ENCODE measurements at regions of chr14 and their contacts with region 1.

Region 1: GRCh38 chr14:20613094-20614037 is 22.2 kb upstream of the RNASE12 start:
- DNase-seq: peak; percentile 97
- ATAC-seq: peak; percentile 80
- H3K4me3 ChIP-seq: peak overlapping the region; percentile 46 to 61
- H3K27ac ChIP-seq: peak overlapping the region; percentile 57
- H3K4me1 ChIP-seq: peaks cover 12 to 39% of the 10 kb centered on the region in 2 experiments
- H3K27me3 ChIP-seq: no peaks in the 10 kb centered on the region
- CTCF ChIP-seq: peak; percentile 43 to 78 (median 74); a peak in 5 of 6 replicates
- POLR2A ChIP-seq: no peak
- RAD21 ChIP-seq: no peak; the same call in 1 of the 2 replicates

Region 2: DNA sequence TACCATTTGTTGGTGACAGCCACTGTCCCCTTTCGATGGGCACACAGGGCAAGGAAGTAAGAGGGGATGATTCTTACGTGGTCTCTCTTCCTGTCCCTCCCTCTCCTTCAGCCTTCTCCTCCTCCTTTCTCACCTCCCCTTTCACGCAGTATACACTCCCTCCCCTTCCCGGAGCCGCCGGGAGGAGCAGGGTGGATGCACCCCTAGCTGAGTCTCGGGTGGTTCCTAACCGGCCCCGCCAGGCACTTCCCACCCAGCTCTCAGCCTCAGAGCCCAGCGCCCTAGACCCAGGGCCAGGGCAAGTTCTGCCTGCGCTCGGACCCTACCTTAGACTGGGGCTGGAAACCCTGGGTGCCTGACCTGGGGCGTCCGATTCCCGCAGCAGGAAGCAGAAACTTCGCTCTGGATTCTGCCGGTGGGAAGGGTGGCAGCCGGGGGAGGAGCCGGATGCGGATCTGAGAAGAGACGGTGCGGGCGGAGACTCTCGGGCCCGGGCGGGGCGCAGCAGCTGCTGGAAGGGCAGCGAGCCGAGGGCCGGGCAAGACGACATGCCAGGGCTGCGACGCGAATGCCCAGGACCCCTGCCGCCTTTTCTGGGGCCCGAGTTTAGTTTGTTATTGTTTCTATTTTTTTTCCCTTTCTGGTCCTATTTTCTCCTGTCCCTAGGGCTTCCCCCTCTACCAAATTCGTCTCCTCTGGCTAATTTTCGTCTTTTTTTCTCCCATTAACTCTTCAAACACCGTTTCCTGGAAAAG is 200.1 kb before region 1 on chr14 and contains the start of gene TEP1:
- CTCF ChIA-PET with region 1: no interaction called
- POLR2A ChIA-PET with region 1: interaction called, 5 read pairs
- RAD21 ChIA-PET with region 1: no interaction called
- intact Hi-C with region 1: loop called (anchors 1 kb)
- DNase-seq: peak; percentile 58
- ATAC-seq: peak; percentile 93
- H3K4me3 ChIP-seq: peak within 1 kb of the TSS; percentile 91 to 96
- H3K27ac ChIP-seq: peak within 1 kb of the TSS; percentile 98
- H3K4me1 ChIP-seq: peaks cover 11 to 41% of the 10 kb centered on the region in 2 experiments
- H3K27me3 ChIP-seq: no peaks in the 10 kb centered on the region
- CTCF ChIP-seq: no peak
- POLR2A ChIP-seq: no peak
- RAD21 ChIP-seq: no peak
- total RNA-seq, gene TEP1: 22.4 TPM

Region 3: GRCh38 chr14:20469242-20469889 is 144.0 kb before region 1 on chr14 and contains the start of gene PNP:
- CTCF ChIA-PET with region 1: no interaction called
- POLR2A ChIA-PET with region 1: no interaction called
- RAD21 ChIA-PET with region 1: no interaction called
- intact Hi-C with region 1: loop called (anchors 5 kb)
- DNase-seq: peak; percentile 85
- ATAC-seq: peak; percentile 95
- H3K4me3 ChIP-seq: peak within 1 kb of the TSS; percentile 80 to 96
- H3K27ac ChIP-seq: peak within 1 kb of the TSS; percentile 86
- H3K4me1 ChIP-seq: peaks cover 10 to 15% of the 10 kb centered on the region in 2 experiments; a peak in 3 of 4 replicates
- H3K27me3 ChIP-seq: no peaks in the 10 kb centered on the region
- CTCF ChIP-seq: no peak
- POLR2A ChIP-seq: peak; percentile 99
- RAD21 ChIP-seq: 0 out of 2 replicates have a peak, but pooled peaks have one; percentile 8
- total RNA-seq, gene PNP: 63.0 TPM

Region 4: GRCh38 chr14:20624495-20625070 is 11.2 kb after region 1 on chr14:
- CTCF ChIA-PET with region 1: interaction called, 16 read pairs
- POLR2A ChIA-PET with region 1: interaction called, 7 read pairs
- RAD21 ChIA-PET with region 1: no interaction called
- intact Hi-C with region 1: loop called (anchors 1 kb)
- DNase-seq: no peak
- ATAC-seq: peak; percentile 45
- H3K4me3 ChIP-seq: peak overlapping the region; percentile 25 to 32
- H3K27ac ChIP-seq: peak overlapping the region; percentile 6; the same call in 1 of the 2 replicates
- H3K4me1 ChIP-seq: peaks cover 9 to 23% of the 10 kb centered on the region in 2 experiments
- H3K27me3 ChIP-seq: no peaks in the 10 kb centered on the region; the same call in 1 of the 2 replicates
- CTCF ChIP-seq: no peak
- POLR2A ChIP-seq: no peak
- RAD21 ChIP-seq: no peak

Region 5: DNA sequence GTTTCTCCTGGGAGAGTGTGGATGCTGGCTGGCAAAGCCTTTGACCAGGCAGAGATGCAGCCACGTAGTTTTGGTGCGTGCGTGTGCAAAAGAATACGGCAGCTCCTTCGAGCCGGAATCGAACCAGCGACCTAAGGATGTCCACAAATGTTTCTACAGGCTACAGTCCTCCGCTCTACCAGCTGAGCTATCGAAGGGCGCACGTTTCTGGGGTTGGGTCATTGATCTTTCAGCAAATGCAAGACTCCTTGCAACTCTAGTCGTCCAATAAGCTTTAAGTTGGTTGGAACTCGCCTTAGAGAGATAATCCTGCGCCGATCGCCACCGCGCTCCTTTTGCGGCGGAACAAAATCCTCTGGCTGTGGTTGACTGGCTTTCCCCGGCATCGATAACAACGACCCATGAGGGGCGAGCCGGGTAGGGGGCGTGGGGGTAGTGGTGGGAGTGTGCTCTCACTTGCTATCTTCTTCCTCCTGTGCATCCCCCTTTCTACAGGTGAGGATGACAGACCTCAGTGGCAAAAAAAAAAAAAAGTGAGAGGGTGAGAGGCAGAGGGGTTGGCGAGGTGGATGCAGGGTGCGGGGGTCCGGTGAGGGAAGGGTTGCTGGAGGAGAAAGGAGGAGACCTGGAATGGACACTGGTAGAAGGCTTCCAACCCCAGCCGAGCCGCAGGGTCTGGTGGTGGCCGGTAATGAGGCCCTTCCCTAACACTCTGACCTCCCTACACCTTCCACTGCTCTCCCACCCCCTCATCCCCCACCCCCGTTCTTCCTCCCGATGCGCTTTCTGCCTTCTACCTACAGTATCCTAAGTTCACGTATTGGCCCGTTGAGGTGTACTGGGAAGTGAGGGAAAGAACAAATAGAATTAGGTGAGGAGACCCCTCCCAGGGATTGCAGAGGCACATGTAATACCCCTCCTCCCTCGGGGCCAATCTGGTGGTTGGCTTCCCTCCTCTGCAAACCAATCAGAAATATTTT is 39.9 kb after region 1 on chr14:
- CTCF ChIA-PET with region 1: interaction called, 15 read pairs
- POLR2A ChIA-PET with region 1: interaction called, 4 read pairs
- RAD21 ChIA-PET with region 1: interaction called in 1 of 2 experiments, 3 read pairs
- intact Hi-C with region 1: loop called (anchors 1 kb)
- DNase-seq: peak; percentile 91
- ATAC-seq: peak; percentile 63
- H3K4me3 ChIP-seq: peak overlapping the region; percentile 38 to 42
- H3K27ac ChIP-seq: no peak overlapping the region
- H3K4me1 ChIP-seq: peaks cover 6 to 29% of the 10 kb centered on the region in 2 experiments
- H3K27me3 ChIP-seq: no peaks in the 10 kb centered on the region
- CTCF ChIP-seq: no peak
- POLR2A ChIP-seq: no peak
- RAD21 ChIP-seq: no peak

Region 6: DNA sequence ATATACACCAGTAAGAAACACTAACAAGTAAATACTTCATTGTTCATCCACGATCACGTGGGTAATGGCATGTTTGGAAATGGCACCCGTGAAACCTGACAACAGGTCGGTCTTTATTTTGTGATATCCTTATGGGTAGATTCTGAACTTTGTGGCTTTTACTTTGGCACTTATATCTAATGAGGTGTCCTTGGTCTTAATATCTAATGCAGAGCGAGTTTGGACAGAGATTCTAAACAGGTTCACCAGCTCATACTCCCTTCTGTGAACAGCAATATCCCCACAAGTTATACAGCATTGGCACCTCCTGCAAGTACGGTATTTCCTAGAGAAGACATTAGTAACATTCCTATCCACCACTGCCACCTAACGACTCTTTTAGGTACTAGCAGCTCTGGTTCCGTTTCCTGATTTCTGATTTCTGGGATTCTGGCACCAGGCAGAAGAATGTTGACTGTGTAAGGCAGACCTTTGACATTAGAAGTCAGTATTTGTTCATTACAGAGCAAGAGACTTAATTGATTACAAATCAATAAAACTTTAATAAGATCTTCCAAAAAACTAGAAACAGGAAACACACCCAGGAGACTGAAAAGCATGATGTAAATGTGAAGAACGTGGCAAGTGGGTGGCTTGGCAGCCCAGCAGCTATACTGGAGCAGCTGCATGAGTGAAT is 77.6 kb after region 1 on chr14:
- CTCF ChIA-PET with region 1: interaction called, 32 read pairs
- POLR2A ChIA-PET with region 1: interaction called, 3 read pairs
- RAD21 ChIA-PET with region 1: interaction called, 5 read pairs
- intact Hi-C with region 1: loop called (anchors 1 kb)
- DNase-seq: peak; percentile 60
- ATAC-seq: peak; percentile 93
- H3K4me3 ChIP-seq: no peak overlapping the region
- H3K27ac ChIP-seq: no peak overlapping the region
- H3K4me1 ChIP-seq: peaks cover 0 to 8% of the 10 kb centered on the region in 2 experiments; a peak in 2 of 4 replicates
- H3K27me3 ChIP-seq: no peaks in the 10 kb centered on the region
- CTCF ChIP-seq: peak; percentile 84 to 89 (median 86)
- POLR2A ChIP-seq: no peak
- RAD21 ChIP-seq: peak; percentile 84

Measured in HCT116 (cell line).